Naive thymus-derived CD4-positive, alpha-beta T cell (primary cell): ENCODE measurements at regions of chr12 and their contacts with region 1.

Region 1: DNA sequence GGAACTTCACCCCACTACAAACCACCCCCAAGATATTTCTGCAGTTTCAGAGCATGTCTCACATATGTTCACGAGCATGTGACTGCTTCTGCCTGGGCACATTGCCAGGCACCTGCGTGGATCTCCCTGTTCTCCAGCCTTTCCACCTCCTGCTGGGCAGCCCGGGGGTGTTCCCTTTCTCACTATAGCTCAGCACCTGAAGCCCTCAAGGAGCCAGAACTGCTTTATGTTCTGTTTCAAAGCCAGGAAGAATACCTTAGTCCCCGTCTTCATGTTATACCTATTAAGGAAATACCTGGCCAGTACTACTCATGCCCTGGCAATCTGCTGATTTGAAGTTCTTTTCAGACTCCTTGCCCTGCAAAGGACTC is 4.2 kb upstream of the FGF6 start:
- DNase-seq: no peak
- ATAC-seq: no peak
- H3K4me3 ChIP-seq: no peak overlapping the region
- H3K4me3 Mint-ChIP-seq: no peak overlapping the region
- H3K27ac ChIP-seq: no peak overlapping the region
- H3K27ac Mint-ChIP-seq: no peak overlapping the region
- H3K4me1 ChIP-seq: no peaks in the 10 kb centered on the region
- H3K4me1 Mint-ChIP-seq: no peaks in the 10 kb centered on the region
- H3K27me3 ChIP-seq: no peaks in the 10 kb centered on the region
- H3K27me3 Mint-ChIP-seq: peaks cover 20 to 35% (median 30%) of the 10 kb centered on the region in 5 donors

Region 2: DNA sequence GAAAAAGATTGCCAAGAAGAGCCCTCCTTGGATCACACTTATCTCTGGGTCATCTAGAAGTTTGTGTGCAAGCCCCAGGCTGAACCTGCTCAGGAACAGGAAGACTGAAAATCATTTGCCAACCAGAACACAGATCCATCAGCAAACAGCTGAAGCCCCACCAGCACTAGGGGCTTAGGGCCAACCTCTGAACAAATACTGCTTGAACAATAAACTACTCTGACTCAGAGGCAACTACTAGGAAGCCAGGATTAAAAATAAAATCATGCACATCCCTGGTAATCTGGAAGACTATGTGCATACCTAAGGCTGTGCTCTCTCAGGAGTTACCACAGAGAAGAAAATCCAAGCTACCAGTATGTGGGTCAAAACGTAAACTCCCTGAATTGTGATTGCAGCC is 286.2 kb after region 1 on chr12:
- CTCF ChIA-PET with region 1: no interaction called
- POLR2A ChIA-PET with region 1: no interaction called
- intact Hi-C with region 1: loop called in 1 of 2 experiments (anchors 10 kb)
- DNase-seq: no peak
- ATAC-seq: no peak
- H3K4me3 ChIP-seq: no peak overlapping the region
- H3K4me3 Mint-ChIP-seq: no peak overlapping the region
- H3K27ac ChIP-seq: no peak overlapping the region
- H3K27ac Mint-ChIP-seq: no peak overlapping the region
- H3K4me1 ChIP-seq: no peaks in the 10 kb centered on the region
- H3K4me1 Mint-ChIP-seq: no peaks in the 10 kb centered on the region
- H3K27me3 ChIP-seq: no peaks in the 10 kb centered on the region
- H3K27me3 Mint-ChIP-seq: peaks cover 15 to 32% (median 18%) of the 10 kb centered on the region in 5 donors